HepG2 (cell line): ENCODE measurements at regions of chr6 and their contacts with region 1.

Region 1: GRCh38 chr6:73653571-73654424 is at the start of gene SLC17A5:
- DNase-seq: peak; percentile 91
- ATAC-seq: peak; percentile 95
- H3K4me3 ChIP-seq: peak within 1 kb of the TSS; percentile 84 to 98 (median 86)
- H3K27ac ChIP-seq: peak within 1 kb of the TSS; percentile 96
- H3K4me1 ChIP-seq: peaks cover 28% of the 10 kb centered on the region
- H3K27me3 ChIP-seq: no peaks in the 10 kb centered on the region; a peak in 1 of 5 replicates
- CTCF ChIP-seq: no peak
- EP300 ChIP-seq: 0 out of 4 replicates have a peak, but pooled peaks of 1 of the 2 experiments have one; percentile 29
- POLR2A ChIP-seq: peak; percentile 68 to 87
- RAD21 ChIP-seq: 0 out of 2 replicates have a peak, but pooled peaks have one; percentile 4
- total RNA-seq, gene SLC17A5: 13.6 and 20.5 TPM in 2 replicates

Region 2: DNA sequence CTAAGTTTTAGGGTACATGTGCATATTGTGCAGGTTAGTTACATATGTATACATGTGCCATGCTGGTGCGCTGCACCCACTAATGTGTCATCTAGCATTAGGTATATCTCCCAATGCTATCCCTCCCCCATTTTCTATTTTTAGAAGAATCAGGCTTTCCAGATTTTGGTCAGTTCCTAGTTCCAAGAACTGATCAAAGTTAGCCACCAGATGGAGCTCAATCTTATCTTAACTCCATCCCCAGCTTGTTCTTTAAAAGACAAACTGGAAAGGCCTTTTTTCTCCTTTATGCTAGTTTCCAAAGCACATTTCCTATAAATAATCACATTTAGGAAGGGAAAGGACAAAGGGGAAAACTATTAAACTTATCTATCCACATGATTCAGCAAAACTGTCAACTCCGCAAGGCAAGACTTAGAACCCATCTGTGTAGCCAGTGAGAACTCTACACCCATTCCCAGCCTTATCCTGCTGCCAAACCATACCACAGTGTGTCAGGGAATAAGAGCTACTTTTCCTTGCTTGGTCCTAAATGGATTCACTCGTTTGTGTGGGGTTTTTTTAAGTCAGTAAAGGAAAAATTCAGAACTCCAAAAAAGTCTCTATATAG is 368.0 kb before region 1 on chr6:
- CTCF ChIA-PET with region 1: no interaction called
- POLR2A ChIA-PET with region 1: no interaction called
- in situ Hi-C with region 1: no loop called
- intact Hi-C with region 1: loop called (anchors 5 kb)
- DNase-seq: peak; percentile 25
- ATAC-seq: peak; percentile 78
- H3K4me3 ChIP-seq: no peak overlapping the region
- H3K27ac ChIP-seq: no peak overlapping the region
- H3K4me1 ChIP-seq: no peaks in the 10 kb centered on the region
- H3K27me3 ChIP-seq: peaks cover 0 to 4% of the 10 kb centered on the region in 2 experiments; a peak in 2 of 5 replicates
- CTCF ChIP-seq: peak; percentile 49
- EP300 ChIP-seq: no peak
- POLR2A ChIP-seq: no peak
- RAD21 ChIP-seq: no peak

Region 3: GRCh38 chr6:73515204-73515655 is 138.6 kb before region 1 on chr6:
- CTCF ChIA-PET with region 1: no interaction called
- POLR2A ChIA-PET with region 1: interaction called, 46 read pairs
- in situ Hi-C with region 1: no loop called
- intact Hi-C with region 1: loop called (anchors 2 kb)
- DNase-seq: no peak
- ATAC-seq: no peak
- H3K4me3 ChIP-seq: no peak overlapping the region
- H3K27ac ChIP-seq: peak overlapping the region; percentile 15
- H3K4me1 ChIP-seq: peaks cover 26% of the 10 kb centered on the region
- H3K27me3 ChIP-seq: no peaks in the 10 kb centered on the region; a peak in 1 of 5 replicates
- CTCF ChIP-seq: no peak
- EP300 ChIP-seq: no peak
- POLR2A ChIP-seq: no peak; a peak in 2 of 4 replicates
- RAD21 ChIP-seq: no peak

Region 4: GRCh38 chr6:73675466-73676098 is 21.8 kb after region 1 on chr6:
- CTCF ChIA-PET with region 1: no interaction called
- POLR2A ChIA-PET with region 1: interaction called, 12 read pairs
- in situ Hi-C with region 1: no loop called
- intact Hi-C with region 1: no loop called
- DNase-seq: peak; percentile 71
- ATAC-seq: peak; percentile 99
- H3K4me3 ChIP-seq: no peak overlapping the region
- H3K27ac ChIP-seq: no peak overlapping the region
- H3K4me1 ChIP-seq: no peaks in the 10 kb centered on the region
- H3K27me3 ChIP-seq: peaks cover 2 to 3% of the 10 kb centered on the region in 2 experiments; a peak in 1 of 5 replicates
- CTCF ChIP-seq: peak; percentile 91
- EP300 ChIP-seq: no peak
- POLR2A ChIP-seq: no peak
- RAD21 ChIP-seq: peak; percentile 72

Region 5: DNA sequence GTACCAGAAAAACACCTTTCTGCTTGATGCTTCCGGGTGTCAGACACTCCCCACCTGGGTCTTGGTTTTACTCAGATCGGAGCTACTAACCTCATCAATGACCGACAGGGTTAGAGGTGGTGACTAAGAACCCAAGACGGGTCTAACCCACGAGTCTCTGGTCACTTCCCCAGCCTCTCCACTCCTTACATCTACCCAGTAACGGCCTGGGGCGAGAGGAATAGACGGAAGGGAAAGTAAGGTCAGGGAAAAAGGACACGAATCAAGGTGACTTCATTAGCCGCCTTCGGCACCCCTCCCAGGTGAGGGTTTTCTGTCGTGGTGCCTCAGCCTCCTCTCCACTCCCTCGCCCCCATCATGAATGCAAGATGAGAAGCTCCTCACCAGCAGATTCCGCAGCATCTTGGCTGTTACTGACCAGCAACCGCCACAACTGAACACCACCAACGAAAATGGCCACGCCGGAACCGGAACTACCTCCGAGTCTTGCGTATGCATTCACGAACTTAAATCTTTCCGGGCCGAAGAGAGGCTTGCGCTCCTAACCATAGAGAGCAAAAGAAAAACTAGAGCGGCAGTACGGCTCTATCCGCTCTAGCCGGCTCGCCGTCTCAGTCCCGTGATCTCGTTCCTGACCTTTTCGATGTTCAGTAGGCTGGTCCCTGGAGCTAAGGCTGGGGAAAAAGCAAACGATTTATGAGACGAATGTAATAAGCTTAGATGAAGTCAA is 1589.7 kb after region 1 on chr6 and contains the start of gene COX7A2:
- CTCF ChIA-PET with region 1: no interaction called
- POLR2A ChIA-PET with region 1: interaction called, 5 read pairs
- in situ Hi-C with region 1: no loop called
- intact Hi-C with region 1: loop called (anchors 5 kb)
- DNase-seq: peak; percentile 96
- ATAC-seq: peak; percentile 98
- H3K4me3 ChIP-seq: peak within 1 kb of the TSS; percentile 84 to 93 (median 89)
- H3K27ac ChIP-seq: peak within 1 kb of the TSS; percentile 91
- H3K4me1 ChIP-seq: peaks cover 22% of the 10 kb centered on the region
- H3K27me3 ChIP-seq: no peaks in the 10 kb centered on the region; a peak in 1 of 5 replicates
- CTCF ChIP-seq: 0 out of 2 replicates have a peak, but pooled peaks have one; percentile 5
- EP300 ChIP-seq: peak; percentile 35 to 40; a peak in 2 of 4 replicates
- POLR2A ChIP-seq: peak; percentile 86 to 96
- RAD21 ChIP-seq: no peak
- total RNA-seq, gene COX7A2: 481 and 556 TPM in 2 replicates